ENCODE measurements at regions of chr12 and their contacts with region 1.

Region 1: GRCh38 chr12:108884116-108885012 is 4.5 kb downstream of the DAO start:
- DNase-seq: peak; percentile 84
- H3K4me3 Mint-ChIP-seq: no peak overlapping the region
- H3K27ac Mint-ChIP-seq: no peak overlapping the region
- H3K4me1 Mint-ChIP-seq: no peaks in the 10 kb centered on the region
- H3K27me3 Mint-ChIP-seq: no peaks in the 10 kb centered on the region

Region 2: DNA sequence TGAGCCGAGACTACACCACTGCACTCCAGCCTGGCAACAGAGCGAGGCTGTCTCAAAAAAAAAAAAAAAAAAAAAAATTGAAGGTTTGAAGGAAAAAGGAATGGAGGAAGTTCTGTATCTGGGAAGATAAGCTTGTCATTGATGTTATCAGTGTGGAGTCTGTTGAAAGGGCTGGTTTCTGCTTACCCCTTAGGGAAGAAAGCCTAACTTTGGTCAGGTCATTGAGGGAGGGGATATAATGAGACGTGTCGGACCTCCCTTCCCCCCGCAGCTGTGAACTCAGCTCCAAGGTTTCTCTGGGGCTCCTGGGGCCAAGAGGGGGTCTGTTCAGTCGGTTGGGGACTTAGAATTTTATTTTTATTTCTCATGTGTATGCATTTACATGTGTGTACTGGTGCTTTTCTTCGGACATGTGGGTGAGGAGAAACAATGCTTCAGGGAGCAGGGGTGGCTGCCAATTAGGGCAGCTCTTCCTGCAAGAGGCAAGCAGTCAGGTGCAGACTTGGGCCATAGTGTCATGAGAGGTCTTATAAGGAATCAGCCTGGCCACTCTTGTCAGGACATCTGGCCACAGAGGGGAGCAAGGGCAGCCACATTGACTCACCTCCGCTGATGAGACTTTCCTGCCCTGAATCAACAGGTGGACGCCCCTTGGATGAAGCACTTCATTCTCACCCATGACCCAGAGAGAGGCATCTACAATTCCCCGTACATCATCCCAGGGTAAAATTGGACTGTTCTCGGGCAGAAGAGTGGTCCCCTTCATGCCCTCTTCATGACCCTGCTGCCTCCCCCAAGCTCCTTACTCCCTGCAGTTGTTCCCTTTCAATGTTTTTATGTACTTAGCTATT is 12.2 kb after region 1 on chr12:
- CTCF ChIA-PET with region 1: interaction called, 13 read pairs
- intact Hi-C with region 1: no loop called
- DNase-seq: no peak
- H3K4me3 Mint-ChIP-seq: no peak overlapping the region
- H3K27ac Mint-ChIP-seq: no peak overlapping the region
- H3K4me1 Mint-ChIP-seq: no peaks in the 10 kb centered on the region
- H3K27me3 Mint-ChIP-seq: peaks cover 8% of the 10 kb centered on the region

Region 3: GRCh38 chr12:109385339-109386067 is 501.1 kb after region 1 on chr12:
- CTCF ChIA-PET with region 1: no interaction called
- intact Hi-C with region 1: loop called (anchors 10 kb)
- DNase-seq: peak; percentile 9
- H3K4me3 Mint-ChIP-seq: no peak overlapping the region
- H3K27ac Mint-ChIP-seq: no peak overlapping the region
- H3K4me1 Mint-ChIP-seq: no peaks in the 10 kb centered on the region
- H3K27me3 Mint-ChIP-seq: peaks cover 8% of the 10 kb centered on the region

Measured in activated naive CD4-positive, alpha-beta T cell treated with anti-CD3 and anti-CD28 coated beads for 36 hours (primary cell).